GM12878 (cell line): ENCODE measurements at regions of chr2 and their contacts with region 1.

Region 1: DNA sequence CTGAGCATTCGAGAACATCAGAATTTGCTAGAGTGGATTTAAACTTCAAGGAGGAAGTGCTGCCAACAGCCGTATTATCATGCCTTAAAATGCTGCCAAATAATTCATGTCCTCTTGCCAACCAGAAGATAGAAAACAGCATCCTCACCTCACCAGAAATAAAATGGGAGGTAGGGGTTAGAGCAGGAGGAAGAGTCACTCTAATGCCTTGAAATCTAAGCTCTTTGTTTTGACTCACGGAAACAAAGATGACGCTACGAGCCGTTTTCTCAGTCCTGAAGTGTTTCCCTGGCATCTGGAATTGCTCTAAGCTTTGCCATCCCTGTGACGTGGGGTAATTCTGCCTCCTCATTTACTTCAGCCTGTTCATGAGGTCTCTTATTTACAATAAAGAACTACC is 97.1 kb downstream of the PRPF40A start:
- DNase-seq: no peak
- ATAC-seq: no peak
- H3K4me3 ChIP-seq: no peak overlapping the region
- H3K27ac ChIP-seq: no peak overlapping the region
- H3K4me1 ChIP-seq: no peaks in the 10 kb centered on the region
- H3K27me3 ChIP-seq: no peaks in the 10 kb centered on the region
- CTCF ChIP-seq: no peak
- EP300 ChIP-seq: no peak
- POLR2A ChIP-seq: no peak
- RAD21 ChIP-seq: no peak

Region 2: GRCh38 chr2:152606081-152606480 is 14.1 kb before region 1 on chr2:
- CTCF ChIA-PET with region 1: interaction called, 3 read pairs
- POLR2A ChIA-PET with region 1: interaction called, 16 read pairs
- RAD21 ChIA-PET with region 1: no interaction called
- SMC1A ChIA-PET with region 1: interaction called, 3 read pairs
- in situ Hi-C with region 1: no loop called
- intact Hi-C with region 1: no loop called
- DNase-seq: no peak
- ATAC-seq: no peak
- H3K4me3 ChIP-seq: no peak overlapping the region
- H3K27ac ChIP-seq: no peak overlapping the region
- H3K4me1 ChIP-seq: no peaks in the 10 kb centered on the region
- H3K27me3 ChIP-seq: no peaks in the 10 kb centered on the region
- CTCF ChIP-seq: no peak
- EP300 ChIP-seq: no peak
- POLR2A ChIP-seq: no peak
- RAD21 ChIP-seq: no peak